ENCODE measurements at regions of chr20 and their contacts with region 1.

Region 1: GRCh38 chr20:45436732-45437391 is 20.9 kb downstream of the PIGT start:
- ATAC-seq: peak; percentile 95 to 100 (median 99)
- H3K4me3 ChIP-seq: peak overlapping the region; percentile 35 to 47 (median 44)
- H3K27ac ChIP-seq: no peak overlapping the region
- H3K4me1 ChIP-seq: no peaks in the 10 kb centered on the region

Region 2: GRCh38 chr20:45311589-45312211 is 125.2 kb before region 1 on chr20:
- in situ Hi-C with region 1: loop called in 2 of 9 experiments (anchors 25 kb)
- ATAC-seq: peak; percentile 43 to 93 (median 74)
- H3K4me3 ChIP-seq: no peak overlapping the region
- H3K27ac ChIP-seq: no peak overlapping the region
- H3K4me1 ChIP-seq: no peaks in the 10 kb centered on the region

Region 3: DNA sequence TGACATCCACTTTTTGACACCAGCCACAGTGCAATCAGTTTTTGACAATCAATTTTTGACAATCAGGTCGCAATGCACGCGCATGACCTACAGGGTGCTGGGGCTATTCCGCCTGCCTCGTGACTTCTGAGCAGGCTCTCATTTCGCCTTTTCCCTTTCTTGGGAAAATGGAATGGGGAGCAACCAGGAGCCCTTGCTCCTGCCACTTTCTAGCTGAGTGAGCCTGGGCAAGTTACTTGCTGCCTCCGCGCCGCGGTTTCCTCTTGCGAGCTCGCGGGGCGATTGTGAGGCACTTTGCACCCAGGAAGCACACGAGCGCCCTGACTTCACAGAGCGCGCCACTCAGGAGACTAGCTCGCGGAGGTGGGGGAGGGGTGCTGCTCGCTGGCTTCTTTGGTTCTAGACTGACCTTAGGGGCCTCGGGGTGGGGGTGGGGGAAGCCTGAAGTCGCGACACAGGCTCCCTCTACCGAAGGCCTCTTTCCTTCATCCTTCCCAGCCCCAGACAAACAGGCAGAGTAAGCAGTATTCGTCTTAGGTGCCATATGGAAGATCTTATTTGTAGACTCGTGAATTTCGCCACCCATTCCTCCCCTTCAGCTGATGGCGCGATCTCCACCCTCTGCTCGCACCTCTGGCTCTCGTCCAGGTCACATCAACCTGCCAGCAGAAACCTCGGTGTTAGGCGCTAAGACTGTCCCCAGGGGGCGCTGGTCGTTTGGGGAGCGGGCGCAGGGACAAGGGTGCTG is 63.3 kb before region 1 on chr20:
- in situ Hi-C with region 1: loop called in 1 of 9 experiments (anchors 10 kb)
- ATAC-seq: peak; percentile 36 to 96 (median 64)
- H3K4me3 ChIP-seq: no peak overlapping the region
- H3K27ac ChIP-seq: no peak overlapping the region
- H3K4me1 ChIP-seq: no peaks in the 10 kb centered on the region